ENCODE measurements at regions of chr11 and their contacts with region 1.

Region 1: DNA sequence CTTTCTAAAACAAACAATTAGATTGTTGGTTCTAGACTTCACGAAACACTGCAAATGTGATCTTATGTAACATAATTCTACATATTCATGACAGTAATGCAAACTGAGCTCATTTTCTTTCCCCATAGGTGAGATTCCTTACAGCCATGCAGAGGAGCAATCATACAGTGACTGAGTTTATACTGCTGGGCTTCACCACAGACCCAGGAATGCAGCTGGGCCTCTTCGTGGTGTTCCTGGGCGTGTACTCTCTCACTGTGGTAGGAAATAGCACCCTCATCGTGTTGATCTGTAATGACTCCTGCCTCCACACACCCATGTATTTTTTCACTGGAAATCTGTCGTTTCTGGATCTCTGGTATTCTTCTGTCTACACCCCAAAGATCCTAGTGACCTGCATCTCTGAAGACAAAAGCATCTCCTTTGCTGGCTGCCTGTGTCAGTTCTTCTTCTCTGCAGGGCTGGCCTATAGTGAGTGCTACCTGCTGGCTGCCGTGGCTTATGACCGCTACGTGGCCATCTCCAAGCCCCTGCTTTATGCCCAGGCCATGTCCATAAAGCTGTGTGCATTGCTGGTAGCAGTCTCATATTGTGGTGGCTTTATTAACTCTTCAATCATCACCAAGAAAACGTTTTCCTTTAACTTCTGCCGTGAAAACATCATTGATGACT is 1.5 kb downstream of the OR9G1 start:
- DNase-seq: no peak
- ATAC-seq: no peak
- H3K4me3 ChIP-seq: no peak overlapping the region
- H3K27ac ChIP-seq: no peak overlapping the region
- H3K4me1 ChIP-seq: no peaks in the 10 kb centered on the region
- H3K27me3 ChIP-seq: no peaks in the 10 kb centered on the region
- CTCF ChIP-seq: no peak
- POLR2A ChIP-seq: no peak
- RAD21 ChIP-seq: no peak

Region 2: GRCh38 chr11:56642339-56642738 is 58.0 kb before region 1 on chr11 and contains the start of gene OR5AP2:
- CTCF ChIA-PET with region 1: no interaction called
- POLR2A ChIA-PET with region 1: no interaction called
- dilution Hi-C with region 1: no loop called
- in situ Hi-C with region 1: no loop called
- intact Hi-C with region 1: no loop called
- DNase-seq: no peak
- ATAC-seq: no peak
- H3K4me3 ChIP-seq: no peak within 1 kb of the TSS
- H3K27ac ChIP-seq: no peak within 1 kb of the TSS
- H3K4me1 ChIP-seq: no peaks in the 10 kb centered on the region
- H3K27me3 ChIP-seq: no peaks in the 10 kb centered on the region
- CTCF ChIP-seq: no peak
- POLR2A ChIP-seq: no peak
- RAD21 ChIP-seq: no peak
- total RNA-seq, gene OR5AP2: not detected in 2 replicates

Region 3: GRCh38 chr11:56670984-56671383 is 29.4 kb before region 1 on chr11:
- CTCF ChIA-PET with region 1: no interaction called
- POLR2A ChIA-PET with region 1: no interaction called
- dilution Hi-C with region 1: no loop called
- in situ Hi-C with region 1: no loop called
- intact Hi-C with region 1: loop called (anchors 2 kb)
- DNase-seq: no peak
- ATAC-seq: no peak
- H3K4me3 ChIP-seq: no peak overlapping the region
- H3K27ac ChIP-seq: no peak overlapping the region
- H3K4me1 ChIP-seq: no peaks in the 10 kb centered on the region
- H3K27me3 ChIP-seq: no peaks in the 10 kb centered on the region
- CTCF ChIP-seq: no peak
- POLR2A ChIP-seq: no peak
- RAD21 ChIP-seq: no peak

Measured in IMR-90 (cell line).